Ovary (tissue), 10 donors: ENCODE measurements at regions of chr9 and their contacts with region 1.

Region 1: DNA sequence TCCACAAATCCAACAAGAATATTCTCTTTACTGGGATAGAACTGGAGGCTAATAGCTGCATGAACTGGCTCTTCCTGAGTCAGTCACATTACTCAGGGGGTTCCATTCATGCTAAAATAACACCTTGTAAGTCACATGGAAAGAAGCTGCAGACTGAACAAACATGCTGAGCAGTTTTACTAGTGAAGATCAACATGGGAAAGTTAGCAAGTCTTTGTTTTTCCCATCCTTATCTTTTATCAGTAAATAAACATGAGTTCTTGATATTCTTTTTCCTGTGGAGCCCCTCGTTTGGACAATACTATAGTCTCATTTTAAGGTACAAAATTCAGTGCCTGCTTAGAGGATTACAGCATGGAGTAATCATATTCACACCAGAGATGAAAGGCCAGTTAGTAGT is 43.7 kb upstream of the TEK start:
- DNase-seq: no peak
- H3K4me3 ChIP-seq: no peak overlapping the region
- H3K27ac ChIP-seq: no peak overlapping the region
- H3K4me1 ChIP-seq: no peaks in the 10 kb centered on the region
- H3K27me3 ChIP-seq: no peaks in the 10 kb centered on the region
- CTCF ChIP-seq: no peak
- EP300 ChIP-seq: no peak
- POLR2A ChIP-seq: no peak

Region 2: GRCh38 chr9:27043176-27043575 is 22.1 kb before region 1 on chr9:
- intact Hi-C with region 1: loop called in 1 of 4 experiments (anchors 1 kb)
- DNase-seq: no peak
- H3K4me3 ChIP-seq: no peak overlapping the region
- H3K27ac ChIP-seq: no peak overlapping the region
- H3K4me1 ChIP-seq: no peaks in the 10 kb centered on the region
- H3K27me3 ChIP-seq: no peaks in the 10 kb centered on the region
- CTCF ChIP-seq: no peak
- EP300 ChIP-seq: no peak
- POLR2A ChIP-seq: no peak